Posterior cingulate gyrus (tissue), 11 donors: ENCODE measurements at regions of chr2 and their contacts with region 1.

Region 1: DNA sequence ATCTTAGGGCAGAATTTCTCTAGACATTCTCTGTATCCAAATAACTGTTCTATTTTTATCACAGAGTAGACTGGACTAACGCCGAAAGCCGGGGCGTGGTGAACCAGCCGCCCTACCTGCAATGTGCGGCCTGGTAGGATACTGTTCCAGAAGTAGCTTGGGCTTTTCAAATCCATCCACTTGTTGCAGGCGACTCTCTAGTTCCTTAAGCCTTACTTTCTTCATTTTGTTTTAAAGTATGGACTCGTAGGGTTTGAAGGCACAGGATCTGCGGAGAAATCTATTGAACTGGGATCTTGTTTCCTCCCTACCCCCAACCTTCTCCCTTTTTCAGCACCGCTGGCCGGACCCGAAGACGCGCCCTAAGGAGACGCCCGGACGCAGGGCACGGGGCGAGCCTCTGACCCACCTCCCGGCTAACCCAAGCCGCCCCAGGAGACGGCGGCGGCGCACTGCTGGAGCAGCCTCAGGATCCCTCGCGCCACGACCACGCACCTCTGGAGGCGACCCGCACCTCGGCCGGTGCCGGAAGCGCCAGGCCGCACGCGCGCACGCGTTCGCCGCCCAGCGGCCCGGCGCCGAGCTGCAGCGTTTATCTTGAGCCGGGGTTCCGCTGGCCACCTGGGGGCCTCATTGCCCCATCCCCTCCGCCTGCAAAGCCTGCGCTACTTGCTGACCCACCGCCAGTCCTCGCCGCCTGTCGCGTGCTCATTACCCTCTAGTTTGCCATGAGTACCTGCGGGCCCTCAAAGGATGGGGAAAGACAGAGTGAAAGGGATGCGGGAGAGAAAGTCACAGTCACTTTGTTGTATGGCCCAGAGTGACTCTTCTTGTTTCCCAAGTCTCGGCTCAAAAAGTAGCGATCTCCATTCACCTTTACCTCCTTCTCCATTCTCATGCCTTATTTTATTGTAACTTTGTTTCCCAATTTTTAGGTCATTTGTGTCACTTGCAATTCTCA is at the start of gene METTL5:
- DNase-seq: peak; percentile 66 to 98 (median 81)

Region 2: GRCh38 chr2:169184074-169184473 is 640.6 kb before region 1 on chr2:
- intact Hi-C with region 1: no loop called
- DNase-seq: no peak

Region 3: GRCh38 chr2:169329688-169330554 is 494.7 kb before region 1 on chr2:
- intact Hi-C with region 1: no loop called
- DNase-seq: peak in 1 of 10 donors; percentile 66

Region 4: GRCh38 chr2:169798718-169799592 is 25.7 kb before region 1 on chr2 and contains the start of gene SSB:
- intact Hi-C with region 1: loop called (anchors 2 kb)
- DNase-seq: peak; percentile 87 to 99 (median 92)

Region 5: DNA sequence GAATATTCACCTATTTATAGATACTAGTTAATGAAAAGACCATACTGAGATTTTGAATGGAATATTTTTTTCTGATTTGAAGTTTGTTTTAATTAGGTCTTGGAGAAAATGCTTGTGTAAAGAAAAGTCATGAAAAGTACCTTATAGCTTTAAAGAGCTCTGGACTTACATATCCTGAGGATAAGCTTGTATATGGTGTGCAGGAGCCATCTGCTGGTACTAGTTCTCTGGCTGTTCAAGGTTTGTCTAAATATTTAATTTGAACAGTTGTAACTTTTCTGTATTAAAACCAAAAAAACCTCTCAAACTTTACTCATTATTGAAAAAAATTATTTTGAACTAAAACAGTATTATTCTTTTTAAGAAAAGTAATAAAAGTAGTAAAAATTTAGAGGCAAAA is 52.7 kb after region 1 on chr2:
- intact Hi-C with region 1: loop called (anchors 1 kb)
- DNase-seq: peak in 1 of 10 donors; percentile 21

Region 6: DNA sequence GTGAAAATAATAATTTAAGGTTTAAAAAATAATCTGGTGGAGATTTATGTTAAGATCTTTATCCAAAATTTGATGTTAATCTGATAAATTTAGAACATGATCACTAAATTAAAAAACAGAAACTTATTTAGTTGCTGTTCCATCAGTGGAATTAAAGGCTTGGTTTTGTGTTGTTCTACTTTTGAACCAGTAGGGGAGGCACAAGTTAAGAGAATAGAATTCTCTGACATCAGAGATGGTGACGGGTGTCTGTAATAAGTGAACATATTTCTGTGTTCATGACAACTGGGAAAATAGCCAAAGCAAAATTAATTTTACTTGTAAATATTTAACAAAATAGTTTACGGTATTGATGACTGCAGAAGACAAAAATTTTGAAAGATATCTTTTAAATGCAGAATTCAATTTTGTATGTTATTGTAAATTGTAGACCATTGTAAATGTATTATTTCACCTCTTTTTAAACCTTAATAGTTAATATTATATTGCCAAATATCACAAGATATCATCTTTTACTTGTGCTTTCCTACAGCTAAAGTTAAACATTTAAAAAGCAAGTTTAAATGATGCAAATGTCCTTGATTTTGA is 108.6 kb after region 1 on chr2:
- intact Hi-C with region 1: loop called (anchors 1 kb)
- DNase-seq: no peak